Activated CD4-positive, alpha-beta memory T cell treated with anti-CD3 and anti-CD28 coated beads for 36 hours (primary cell): ENCODE measurements at regions of chr1 and their contacts with region 1.

Region 1: DNA sequence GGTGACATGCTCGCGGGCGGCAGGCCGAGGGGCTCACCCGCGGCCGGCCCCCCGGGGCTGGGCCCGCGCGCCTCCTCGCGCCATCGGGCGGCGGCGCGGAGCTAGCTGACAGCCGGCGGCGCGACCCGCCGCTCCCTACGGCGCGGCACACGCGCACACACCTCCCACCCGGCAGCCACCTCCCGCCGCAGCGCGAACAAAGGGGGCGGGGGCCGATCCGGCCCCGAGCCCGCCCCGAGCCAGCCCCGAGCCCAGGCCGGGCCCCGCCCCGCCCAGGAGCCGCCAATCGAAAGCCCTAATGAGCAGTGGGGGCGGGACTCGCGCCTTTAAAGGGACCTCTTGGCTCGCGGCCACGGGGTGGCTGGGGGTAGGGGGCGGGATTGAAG is at the start of gene KIF21B:
- DNase-seq: peak; percentile 93
- H3K4me3 Mint-ChIP-seq: peak within 1 kb of the TSS; percentile 98
- H3K27ac Mint-ChIP-seq: peak within 1 kb of the TSS; percentile 99
- H3K4me1 Mint-ChIP-seq: peaks cover 81% of the 10 kb centered on the region
- H3K27me3 Mint-ChIP-seq: no peaks in the 10 kb centered on the region
- total RNA-seq, gene KIF21B: 56.6 to 58.7 TPM

Region 2: DNA sequence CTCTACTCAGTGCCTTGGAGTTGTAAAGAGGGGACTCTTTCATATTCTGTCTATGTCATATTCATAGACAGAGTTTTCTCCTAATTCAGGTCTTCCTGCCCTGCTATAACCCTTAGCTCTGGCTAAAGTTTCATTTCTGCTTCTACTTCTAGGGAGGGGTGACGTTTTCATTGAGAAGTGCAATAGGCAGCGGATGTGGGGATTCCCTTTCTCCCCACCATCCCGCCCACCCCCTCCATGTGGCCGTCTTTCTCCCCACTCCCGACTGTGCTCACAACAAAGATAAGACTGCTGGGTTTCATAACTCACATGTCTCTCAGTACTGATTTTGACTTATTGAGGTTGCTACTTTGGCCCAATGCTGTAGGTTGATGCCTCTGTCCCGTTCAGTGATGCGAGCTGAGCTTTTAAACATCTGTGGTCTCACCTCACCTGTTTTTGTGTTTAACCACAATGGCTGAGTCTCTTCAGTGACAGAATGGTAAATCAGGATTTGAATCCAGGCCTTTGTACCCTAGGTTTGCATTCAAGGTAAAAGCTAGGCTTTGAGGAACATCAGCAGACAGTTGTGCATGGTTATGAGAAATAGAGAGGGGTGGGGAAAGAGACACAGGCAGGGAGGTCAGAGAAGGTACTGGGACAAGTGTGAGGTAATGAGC is 395.2 kb before region 1 on chr1:
- CTCF ChIA-PET with region 1: no interaction called
- POLR2A ChIA-PET with region 1: interaction called, 3 read pairs
- intact Hi-C with region 1: loop called (anchors 5 kb)
- DNase-seq: peak; percentile 85
- H3K4me3 Mint-ChIP-seq: peak overlapping the region; percentile 11
- H3K27ac Mint-ChIP-seq: peak overlapping the region; percentile 28
- H3K4me1 Mint-ChIP-seq: peaks cover 36% of the 10 kb centered on the region
- H3K27me3 Mint-ChIP-seq: no peaks in the 10 kb centered on the region

Region 3: DNA sequence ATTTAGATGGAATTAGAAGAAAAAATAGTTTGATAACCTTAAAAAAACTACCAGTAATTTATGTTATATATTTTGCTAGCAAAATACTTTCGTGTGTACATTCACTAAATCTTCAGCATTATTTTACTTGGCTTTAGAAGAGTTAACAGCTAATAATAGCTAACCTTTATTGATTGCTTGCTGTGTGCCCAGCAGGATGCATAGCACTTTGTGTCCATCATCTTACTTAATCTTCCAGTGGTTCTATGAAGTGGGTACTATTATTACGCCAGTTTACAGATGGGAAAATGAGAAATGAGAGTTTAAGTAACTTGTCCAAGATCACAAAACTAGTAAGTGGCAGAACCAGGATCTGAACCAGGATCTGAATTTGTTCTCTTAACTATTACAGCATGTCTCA is 192.4 kb before region 1 on chr1:
- CTCF ChIA-PET with region 1: no interaction called
- POLR2A ChIA-PET with region 1: no interaction called
- intact Hi-C with region 1: no loop called
- DNase-seq: no peak
- H3K4me3 Mint-ChIP-seq: no peak overlapping the region
- H3K27ac Mint-ChIP-seq: no peak overlapping the region
- H3K4me1 Mint-ChIP-seq: peaks cover 3% of the 10 kb centered on the region
- H3K27me3 Mint-ChIP-seq: no peaks in the 10 kb centered on the region

Region 4: GRCh38 chr1:200890818-200891773 is 132.4 kb before region 1 on chr1:
- CTCF ChIA-PET with region 1: interaction called, 5 read pairs
- POLR2A ChIA-PET with region 1: no interaction called
- intact Hi-C with region 1: loop called (anchors 2 kb)
- DNase-seq: no peak
- H3K4me3 Mint-ChIP-seq: peak overlapping the region; percentile 27
- H3K27ac Mint-ChIP-seq: peak overlapping the region; percentile 29
- H3K4me1 Mint-ChIP-seq: peaks cover 52% of the 10 kb centered on the region
- H3K27me3 Mint-ChIP-seq: peaks cover 32% of the 10 kb centered on the region

Region 5: GRCh38 chr1:200979574-200980451 is 43.7 kb before region 1 on chr1:
- CTCF ChIA-PET with region 1: interaction called, 96 read pairs
- POLR2A ChIA-PET with region 1: interaction called, 3 read pairs
- intact Hi-C with region 1: no loop called
- DNase-seq: peak; percentile 81
- H3K4me3 Mint-ChIP-seq: no peak overlapping the region
- H3K27ac Mint-ChIP-seq: peak overlapping the region; percentile 25
- H3K4me1 Mint-ChIP-seq: no peaks in the 10 kb centered on the region
- H3K27me3 Mint-ChIP-seq: no peaks in the 10 kb centered on the region

Region 6: GRCh38 chr1:201042779-201043461 is 19.4 kb after region 1 on chr1:
- CTCF ChIA-PET with region 1: interaction called, 28 read pairs
- POLR2A ChIA-PET with region 1: no interaction called
- intact Hi-C with region 1: loop called (anchors 2 kb)
- DNase-seq: peak; percentile 81
- H3K4me3 Mint-ChIP-seq: no peak overlapping the region
- H3K27ac Mint-ChIP-seq: no peak overlapping the region
- H3K4me1 Mint-ChIP-seq: peaks cover 3% of the 10 kb centered on the region
- H3K27me3 Mint-ChIP-seq: no peaks in the 10 kb centered on the region

Region 7: GRCh38 chr1:201114236-201115131 is 91.0 kb after region 1 on chr1:
- CTCF ChIA-PET with region 1: interaction called, 13 read pairs
- POLR2A ChIA-PET with region 1: interaction called, 4 read pairs
- intact Hi-C with region 1: no loop called
- DNase-seq: peak; percentile 89
- H3K4me3 Mint-ChIP-seq: peak overlapping the region; percentile 86
- H3K27ac Mint-ChIP-seq: peak overlapping the region; percentile 6
- H3K4me1 Mint-ChIP-seq: no peaks in the 10 kb centered on the region
- H3K27me3 Mint-ChIP-seq: no peaks in the 10 kb centered on the region